ENCODE measurements at regions of chr10 and their contacts with region 1.

Region 1: GRCh38 chr10:104406715-104407650 is 53.4 kb downstream of the CFAP58 start:
- DNase-seq: peak; percentile 61 to 77 (median 75)
- H3K4me3 ChIP-seq: no peak overlapping the region
- H3K27ac ChIP-seq: no peak overlapping the region
- H3K4me1 ChIP-seq: peaks cover 0 to 3% (median 0%) of the 10 kb centered on the region in 4 experiments
- H3K27me3 ChIP-seq: peaks cover 0 to 8% (median 0%) of the 10 kb centered on the region in 5 experiments

Region 2: DNA sequence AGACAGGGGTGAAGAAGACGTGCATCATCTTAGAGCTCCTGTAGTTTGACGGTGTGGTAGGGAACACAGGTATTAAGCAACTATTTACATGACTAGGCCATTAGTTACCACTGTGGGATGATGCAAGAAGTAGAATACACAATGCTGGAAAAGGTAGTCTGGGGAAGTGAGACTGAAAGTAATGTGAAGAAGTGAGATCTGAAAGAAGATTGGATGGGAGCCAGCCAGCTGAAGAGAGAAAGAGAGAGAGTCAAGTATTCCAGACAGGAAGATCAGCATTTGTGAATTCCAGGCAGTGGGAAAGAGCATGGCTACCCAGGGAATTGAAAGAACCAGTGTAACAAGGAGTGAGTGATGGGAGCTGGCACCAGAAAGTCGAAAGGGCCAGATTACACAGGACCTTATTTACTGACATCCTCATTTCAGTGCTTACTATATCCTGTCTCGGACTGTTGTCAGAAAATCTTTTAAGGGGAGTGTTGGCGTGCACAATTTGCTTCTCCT is 57.3 kb before region 1 on chr10:
- CTCF ChIA-PET with region 1: no interaction called
- POLR2A ChIA-PET with region 1: no interaction called
- DNase-seq: peak in 2 of 3 donors; percentile 74 to 78
- H3K4me3 ChIP-seq: peak overlapping the region in 3 of 7 experiments; percentile 38 to 63 (median 62)
- H3K27ac ChIP-seq: peak overlapping the region in 1 of 2 experiments; percentile 31
- H3K4me1 ChIP-seq: peaks cover 34 to 50% (median 44%) of the 10 kb centered on the region in 4 experiments
- H3K27me3 ChIP-seq: peaks cover 0 to 4% (median 0%) of the 10 kb centered on the region in 5 experiments

Region 3: GRCh38 chr10:104393387-104393786 is 13.6 kb before region 1 on chr10:
- CTCF ChIA-PET with region 1: interaction called, 10 read pairs
- POLR2A ChIA-PET with region 1: no interaction called
- DNase-seq: no peak
- H3K4me3 ChIP-seq: no peak overlapping the region
- H3K27ac ChIP-seq: no peak overlapping the region
- H3K4me1 ChIP-seq: no peaks in the 10 kb centered on the region
- H3K27me3 ChIP-seq: peaks cover 0 to 16% (median 3%) of the 10 kb centered on the region in 5 experiments

Region 4: GRCh38 chr10:104417637-104418296 is 10.8 kb after region 1 on chr10:
- CTCF ChIA-PET with region 1: interaction called, 13 read pairs
- POLR2A ChIA-PET with region 1: no interaction called
- DNase-seq: peak; percentile 77 to 92 (median 88)
- H3K4me3 ChIP-seq: no peak overlapping the region
- H3K27ac ChIP-seq: no peak overlapping the region
- H3K4me1 ChIP-seq: peaks cover 0 to 22% (median 6%) of the 10 kb centered on the region in 4 experiments
- H3K27me3 ChIP-seq: peaks cover 0 to 2% (median 0%) of the 10 kb centered on the region in 5 experiments

Region 5: DNA sequence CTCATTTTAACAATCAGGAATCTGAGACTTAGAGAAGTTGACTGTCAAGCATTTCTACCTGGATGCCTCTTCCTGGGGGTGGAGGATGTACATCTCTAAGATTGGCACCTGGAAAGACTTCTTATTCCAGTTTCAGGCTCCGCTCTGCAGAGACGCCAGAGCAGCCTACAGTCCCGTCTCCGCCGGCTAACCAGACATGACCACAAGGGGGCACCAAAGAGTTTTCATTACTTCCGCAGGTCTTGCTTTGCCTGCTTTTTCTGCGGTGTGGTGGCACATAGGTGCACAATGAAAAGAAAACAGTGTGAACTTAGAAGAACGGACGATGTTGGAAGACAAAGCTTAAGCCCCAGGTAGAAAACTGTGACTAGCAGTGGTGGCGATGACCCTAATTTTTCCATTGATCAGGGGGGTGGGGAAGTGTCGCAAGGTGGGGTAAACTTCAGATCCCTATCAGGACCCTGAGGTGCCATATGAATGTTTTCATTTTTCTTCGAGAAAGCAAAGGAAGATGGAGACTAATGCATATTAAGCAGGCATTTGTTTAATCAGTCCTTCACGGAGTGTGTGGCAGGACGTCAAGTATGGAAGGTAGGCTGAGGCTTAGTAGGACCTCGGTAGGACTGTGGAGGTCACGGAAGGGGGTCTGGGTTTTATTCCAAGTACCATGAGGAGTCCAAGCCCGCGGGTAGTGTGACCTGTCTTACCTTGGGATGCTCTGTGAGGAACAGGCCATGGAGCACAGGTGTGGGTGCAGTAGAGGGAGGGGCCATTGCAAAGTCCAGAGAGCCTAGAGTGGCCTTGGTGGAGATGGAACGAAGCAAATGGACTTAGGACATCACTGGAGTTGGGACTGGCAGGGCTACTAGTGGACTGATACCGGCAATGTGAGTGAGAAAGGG is 174.0 kb after region 1 on chr10:
- CTCF ChIA-PET with region 1: interaction called, 32 read pairs
- POLR2A ChIA-PET with region 1: no interaction called
- DNase-seq: peak; percentile 59 to 80 (median 73)
- H3K4me3 ChIP-seq: peak overlapping the region in 1 of 7 experiments; percentile 45
- H3K27ac ChIP-seq: no peak overlapping the region
- H3K4me1 ChIP-seq: no peaks in the 10 kb centered on the region
- H3K27me3 ChIP-seq: peaks cover 0 to 10% (median 1%) of the 10 kb centered on the region in 5 experiments

Region 6: GRCh38 chr10:104614245-104614831 is 207.4 kb after region 1 on chr10:
- CTCF ChIA-PET with region 1: interaction called, 26 read pairs
- POLR2A ChIA-PET with region 1: no interaction called
- DNase-seq: peak; percentile 7 to 44 (median 32)
- H3K4me3 ChIP-seq: no peak overlapping the region
- H3K27ac ChIP-seq: no peak overlapping the region
- H3K4me1 ChIP-seq: peaks cover 0 to 3% (median 0%) of the 10 kb centered on the region in 4 experiments
- H3K27me3 ChIP-seq: peaks cover 0 to 2% (median 0%) of the 10 kb centered on the region in 5 experiments

Region 7: DNA sequence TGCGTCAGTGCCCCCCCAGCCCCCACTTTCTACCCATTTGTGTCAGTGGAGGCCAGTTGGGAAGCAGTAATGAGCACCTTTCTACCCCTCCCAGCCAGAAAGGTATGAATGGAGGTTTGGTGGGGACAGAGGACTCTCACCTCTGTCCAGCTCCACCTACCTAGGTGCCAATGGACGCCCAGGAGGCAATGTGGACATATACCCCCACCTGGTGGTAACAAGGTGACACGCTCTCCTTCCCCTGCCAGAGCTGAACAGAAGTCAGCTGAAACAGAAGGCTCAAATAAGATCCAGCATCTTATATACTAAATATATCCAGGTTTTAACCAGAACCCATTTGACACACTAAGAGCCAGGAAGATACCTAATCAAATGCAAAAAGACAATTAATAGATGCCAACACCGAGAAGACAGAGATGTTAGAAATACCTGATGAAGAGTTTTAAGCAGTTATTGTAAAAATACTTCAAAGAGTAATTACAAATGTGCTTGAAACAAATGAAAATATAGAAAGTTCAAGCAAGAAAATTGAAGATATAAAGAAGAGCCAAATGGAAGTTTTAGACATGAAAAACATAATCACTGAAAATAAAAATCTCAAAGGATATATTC is 215.7 kb after region 1 on chr10:
- CTCF ChIA-PET with region 1: interaction called, 15 read pairs
- POLR2A ChIA-PET with region 1: no interaction called
- DNase-seq: peak in 2 of 3 donors; percentile 35 to 39
- H3K4me3 ChIP-seq: no peak overlapping the region
- H3K27ac ChIP-seq: no peak overlapping the region
- H3K4me1 ChIP-seq: no peaks in the 10 kb centered on the region
- H3K27me3 ChIP-seq: peaks cover 0 to 6% (median 2%) of the 10 kb centered on the region in 5 experiments

Measured in common myeloid progenitor, CD34-positive (primary cell).